ENCODE measurements at regions of chr18 and their contacts with region 1.

Region 1: GRCh38 chr18:11980555-11981382 is 538 bp upstream of the IMPA2 start:
- DNase-seq: peak; percentile 95 to 99
- H3K4me3 ChIP-seq: peak overlapping the region; percentile 59 to 100
- H3K27ac ChIP-seq: peak overlapping the region; percentile 87 to 92
- H3K4me1 ChIP-seq: peaks cover 0 to 12% of the 10 kb centered on the region in 2 donors
- H3K27me3 ChIP-seq: no peaks in the 10 kb centered on the region
- CTCF ChIP-seq: peak in 1 of 3 experiments; percentile 32

Region 2: DNA sequence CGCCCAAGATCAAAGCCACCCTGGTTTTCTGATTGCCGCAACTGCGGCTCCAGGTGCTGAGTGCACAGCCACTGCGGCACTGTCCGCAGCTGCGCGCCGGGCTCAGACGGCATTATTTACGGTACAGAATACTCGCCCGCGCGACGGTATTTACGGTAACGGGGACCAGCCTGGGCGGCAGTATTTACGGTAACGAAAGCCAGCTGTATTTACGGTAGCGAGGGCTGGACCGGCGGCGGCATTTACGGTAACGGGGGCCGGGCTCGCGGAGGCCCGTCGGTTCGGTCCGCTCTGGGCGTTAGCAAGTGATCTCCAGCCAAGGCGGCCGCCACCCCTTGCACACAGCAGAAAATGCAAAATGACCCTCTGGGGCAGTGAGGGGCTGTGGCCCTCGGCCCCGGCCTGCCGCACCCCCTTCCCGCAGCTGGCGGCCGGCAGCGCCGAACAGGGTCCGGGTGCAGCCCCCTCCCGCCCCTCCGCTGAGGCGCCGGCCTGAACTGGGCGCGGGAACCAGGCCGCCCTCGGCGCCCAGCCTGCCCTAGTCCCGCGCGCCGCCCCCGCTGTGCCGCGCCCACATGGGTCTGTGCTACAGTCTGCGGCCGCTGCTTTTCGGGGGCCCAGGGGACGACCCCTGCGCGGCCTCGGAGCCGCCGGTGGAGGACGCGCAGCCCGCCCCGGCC is 291.6 kb before region 1 on chr18 and contains the start of gene GNAL:
- intact Hi-C with region 1: loop called (anchors 1 kb)
- DNase-seq: peak in 1 of 2 donors; percentile 90
- H3K4me3 ChIP-seq: peak within 1 kb of the TSS; percentile 57 to 98
- H3K27ac ChIP-seq: peak within 1 kb of the TSS; percentile 72 to 89
- H3K4me1 ChIP-seq: peaks cover 0 to 3% of the 10 kb centered on the region in 2 donors
- H3K27me3 ChIP-seq: no peaks in the 10 kb centered on the region
- CTCF ChIP-seq: no peak
- total RNA-seq, gene GNAL: 5.9 TPM

Region 3: DNA sequence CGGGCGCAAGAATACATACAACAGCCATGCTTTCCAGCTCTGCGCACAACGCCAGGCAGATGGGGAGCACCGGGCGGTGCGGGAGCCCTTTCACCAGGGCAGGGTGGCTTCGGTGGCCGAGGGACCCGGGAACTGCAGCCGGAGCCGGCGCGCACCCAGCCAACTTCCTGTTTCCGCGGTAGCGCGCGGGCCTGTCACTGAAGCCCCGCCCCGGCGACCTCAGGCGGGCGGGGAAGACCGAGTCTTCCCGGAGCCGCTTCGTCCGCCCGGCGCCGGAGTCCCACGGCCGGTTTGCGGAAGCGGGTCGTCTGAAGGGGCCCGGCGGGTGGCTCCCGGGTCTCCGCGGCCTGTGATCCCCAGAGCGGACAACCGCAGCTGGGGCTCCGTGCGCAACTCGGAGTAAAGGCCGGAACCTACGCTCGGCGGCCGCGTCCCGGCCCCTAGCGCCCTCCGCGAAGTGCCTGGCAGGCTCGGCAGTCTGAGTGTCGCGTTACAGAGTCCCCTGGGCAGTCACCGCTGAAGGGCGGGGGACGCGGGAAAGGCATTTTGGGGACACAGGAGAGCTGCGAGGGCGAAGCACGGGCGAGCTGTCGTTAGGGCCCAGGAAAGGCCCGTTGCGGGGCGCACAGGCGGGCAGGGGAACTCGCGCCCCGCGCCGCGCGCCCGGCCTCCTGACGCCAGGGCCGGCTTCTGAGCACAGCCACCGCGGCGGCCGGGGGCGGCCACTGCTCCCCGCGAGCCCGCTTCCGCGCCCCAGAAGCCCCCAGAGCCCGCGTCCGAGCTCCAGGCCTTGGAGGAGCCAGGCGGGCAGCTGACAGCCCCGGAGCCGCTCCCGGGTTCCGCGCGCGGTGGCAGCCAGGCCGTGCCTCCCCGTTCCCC is 72.3 kb before region 1 on chr18 and contains the start of gene MPPE1:
- intact Hi-C with region 1: loop called (anchors 1 kb)
- DNase-seq: peak; percentile 49 to 95
- H3K4me3 ChIP-seq: peak within 1 kb of the TSS; percentile 77 to 94
- H3K27ac ChIP-seq: peak within 1 kb of the TSS; percentile 99 to 100
- H3K4me1 ChIP-seq: peaks cover 0 to 10% of the 10 kb centered on the region in 2 donors
- H3K27me3 ChIP-seq: no peaks in the 10 kb centered on the region
- CTCF ChIP-seq: no peak
- total RNA-seq, gene MPPE1: 18.9 TPM

Region 4: DNA sequence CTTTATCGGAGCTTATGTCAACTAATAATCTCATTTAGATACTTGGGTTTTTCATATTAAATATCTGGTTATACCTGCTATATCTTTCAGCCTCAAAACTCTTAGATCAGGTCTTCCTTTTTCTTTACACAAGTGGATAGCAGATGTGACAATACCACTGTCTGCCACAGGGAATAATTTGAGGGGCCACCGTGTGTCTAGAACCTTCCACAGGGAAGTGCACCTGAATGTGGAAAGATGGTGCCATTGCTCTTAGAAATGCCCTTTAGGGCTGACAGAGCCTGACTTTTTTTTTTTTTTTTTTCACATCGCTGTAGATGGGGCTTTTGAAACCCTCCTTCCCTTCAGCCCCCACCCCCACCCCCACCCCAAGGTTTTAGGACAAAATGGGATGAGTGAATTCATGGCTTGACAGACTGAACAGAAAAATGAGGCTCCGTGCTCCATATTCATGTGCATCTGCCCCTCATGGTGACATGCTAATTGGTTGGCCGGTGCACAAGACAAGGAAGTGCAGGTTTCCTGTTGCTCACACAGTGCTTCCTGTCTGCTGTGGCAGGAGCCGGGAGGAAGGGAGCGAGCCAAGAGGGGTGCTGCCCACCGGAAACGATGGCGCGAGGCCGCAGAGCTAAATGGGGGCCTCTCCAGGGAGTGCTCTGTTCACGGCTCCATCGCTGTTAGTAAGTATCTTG is 1483.8 kb after region 1 on chr18:
- intact Hi-C with region 1: no loop called
- DNase-seq: peak; percentile 43 to 76
- H3K4me3 ChIP-seq: no peak overlapping the region
- H3K27ac ChIP-seq: peak overlapping the region; percentile 31 to 36
- H3K4me1 ChIP-seq: peaks cover 3 to 11% of the 10 kb centered on the region in 2 donors
- H3K27me3 ChIP-seq: no peaks in the 10 kb centered on the region
- CTCF ChIP-seq: no peak